HEK293T (cell line): ENCODE measurements at regions of chr19 and their contacts with region 1.

Region 1: GRCh38 chr19:11137542-11138384 is 17.8 kb downstream of the SPC24 start:
- DNase-seq: peak; percentile 84

Region 2: GRCh38 chr19:11155373-11156120 is 17.8 kb after region 1 on chr19 and contains the start of gene SPC24:
- CTCF ChIA-PET with region 1: no interaction called
- POLR2A ChIA-PET with region 1: interaction called, 13 read pairs
- DNase-seq: peak; percentile 100